Lower leg skin (tissue), 4 donors: ENCODE measurements at regions of chr5 and their contacts with region 1.

Region 1: GRCh38 chr5:32444431-32445286 is at the start of gene ZFR:
- DNase-seq: peak; percentile 89 to 98
- H3K4me3 ChIP-seq: peak within 1 kb of the TSS; percentile 93
- CTCF ChIP-seq: no peak
- POLR2A ChIP-seq: no peak
- total RNA-seq, gene ZFR: 44.9 to 61.6 (median 52.7) TPM

Region 2: DNA sequence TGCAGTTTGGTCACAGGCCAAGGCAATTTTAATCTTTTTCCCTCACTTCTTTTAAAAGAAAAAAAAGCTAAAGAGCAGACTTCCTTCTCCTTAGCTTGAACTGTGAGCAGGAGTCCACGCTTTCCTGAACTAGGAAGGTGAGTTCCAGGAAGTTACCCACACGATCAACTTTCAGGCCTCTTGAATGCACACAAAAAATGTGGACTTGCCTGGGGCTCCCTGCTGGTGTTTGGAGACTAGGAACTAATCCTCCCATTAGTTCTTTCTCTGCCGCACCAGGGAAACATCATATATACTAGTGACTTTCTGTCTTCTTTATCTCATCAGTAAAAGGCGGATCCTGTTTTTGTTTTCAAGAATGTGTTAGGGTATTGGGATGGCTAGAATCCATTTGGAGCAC is 510.5 kb before region 1 on chr5:
- intact Hi-C with region 1: loop called (anchors 5 kb)
- DNase-seq: no peak
- H3K4me3 ChIP-seq: no peak overlapping the region
- CTCF ChIP-seq: no peak
- POLR2A ChIP-seq: no peak

Region 3: DNA sequence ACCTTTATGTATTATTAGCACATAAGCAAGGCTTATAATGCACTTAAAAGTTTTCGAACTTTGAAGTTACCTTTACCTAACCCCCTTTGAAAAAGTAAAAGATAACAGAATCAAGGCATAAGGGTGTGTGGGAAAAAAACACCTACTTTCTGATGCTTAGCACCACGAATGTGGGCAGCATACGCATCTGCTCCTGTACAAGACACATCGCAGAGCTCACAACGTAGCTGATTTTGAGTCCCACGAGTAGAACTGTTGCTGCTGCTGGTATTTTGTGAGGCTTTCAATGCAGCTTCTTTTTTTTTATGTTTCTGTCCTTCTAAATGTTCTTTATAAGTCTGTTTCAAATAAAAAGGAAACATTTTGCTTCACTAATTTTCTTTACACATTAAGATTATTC is 40.9 kb before region 1 on chr5:
- intact Hi-C with region 1: no loop called
- DNase-seq: no peak
- H3K4me3 ChIP-seq: no peak overlapping the region
- CTCF ChIP-seq: no peak
- POLR2A ChIP-seq: no peak